Activated CD4-positive, alpha-beta T cell treated with anti-CD3 and anti-CD28 coated beads for 36 hours (primary cell): ENCODE measurements at regions of chr4 and their contacts with region 1.

Region 1: DNA sequence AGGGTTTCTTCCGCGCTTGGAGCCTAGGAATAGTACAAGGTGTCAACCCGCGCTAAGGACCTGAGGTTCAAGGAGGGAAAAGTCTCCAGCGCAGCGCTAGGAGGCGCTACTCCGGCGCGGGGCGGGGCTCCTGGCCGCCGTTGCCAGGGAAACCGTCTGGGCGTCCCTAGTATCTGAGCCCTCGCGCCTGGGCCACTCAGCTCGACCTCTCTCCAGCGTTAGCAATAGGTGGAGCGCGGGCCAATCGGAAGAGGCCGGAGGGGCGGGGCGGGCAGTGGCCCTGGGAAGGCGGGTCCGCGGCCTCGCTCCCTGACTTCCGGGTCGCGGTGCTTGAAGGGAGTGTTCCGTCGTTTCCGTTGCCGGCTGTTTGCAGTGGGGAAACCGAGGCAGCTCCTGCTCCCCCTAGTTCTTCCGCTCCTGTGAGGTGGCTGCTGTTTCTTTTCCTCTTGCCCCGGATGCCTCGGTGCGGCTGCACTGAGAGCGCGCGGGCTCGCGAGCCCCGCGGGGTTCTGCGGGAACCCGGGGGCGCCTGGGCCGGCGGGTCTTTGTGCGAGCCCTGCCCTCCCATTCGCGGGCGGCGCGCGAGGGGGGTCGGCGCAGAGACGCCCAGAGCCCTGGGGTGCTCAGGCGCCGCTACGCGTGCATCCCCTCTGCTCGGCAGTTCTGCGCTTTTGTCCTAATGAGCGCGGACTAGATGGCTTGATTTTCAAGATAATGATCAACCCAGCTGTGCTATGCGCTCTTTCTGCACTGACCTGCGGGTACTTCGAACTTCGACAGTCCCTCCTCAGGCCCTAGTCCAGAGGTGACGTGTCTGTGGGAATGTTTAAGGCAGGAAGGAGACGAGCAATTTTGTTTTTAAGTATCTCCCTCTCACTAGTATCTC is at the start of gene ELMOD2:
- DNase-seq: peak; percentile 99
- ATAC-seq: peak; percentile 100
- H3K4me3 Mint-ChIP-seq: peak within 1 kb of the TSS; percentile 82
- H3K27ac Mint-ChIP-seq: peak within 1 kb of the TSS; percentile 32
- H3K4me1 Mint-ChIP-seq: peaks cover 19% of the 10 kb centered on the region
- H3K27me3 Mint-ChIP-seq: no peaks in the 10 kb centered on the region
- total RNA-seq, gene ELMOD2: 13.2 to 14.3 TPM

Region 2: GRCh38 chr4:139083956-139084803 is 1439.9 kb before region 1 on chr4:
- CTCF ChIA-PET with region 1: no interaction called
- POLR2A ChIA-PET with region 1: no interaction called
- intact Hi-C with region 1: loop called in 1 of 2 experiments (anchors 10 kb)
- DNase-seq: peak; percentile 92
- ATAC-seq: peak; percentile 64
- H3K4me3 Mint-ChIP-seq: peak overlapping the region; percentile 100
- H3K27ac Mint-ChIP-seq: peak overlapping the region; percentile 99
- H3K4me1 Mint-ChIP-seq: peaks cover 30% of the 10 kb centered on the region
- H3K27me3 Mint-ChIP-seq: no peaks in the 10 kb centered on the region

Region 3: DNA sequence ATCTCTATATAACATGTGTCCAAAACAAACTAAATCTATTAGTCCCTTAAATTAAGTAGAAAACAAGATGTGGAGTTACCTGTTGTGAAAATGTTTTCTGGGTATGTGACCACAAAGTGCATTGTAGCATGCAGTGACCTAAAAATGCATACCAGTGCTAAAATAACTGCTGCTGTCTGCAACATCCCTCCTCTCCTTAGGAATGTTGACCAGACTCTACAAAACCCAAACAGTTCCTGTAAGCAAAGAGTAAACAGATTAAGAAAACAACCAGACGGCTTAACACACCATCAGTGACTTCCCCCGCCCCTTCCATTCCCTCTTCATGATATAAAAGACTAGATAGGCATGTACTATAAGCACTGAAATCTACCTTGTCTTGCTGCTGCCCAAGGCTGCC is 1086.0 kb before region 1 on chr4:
- CTCF ChIA-PET with region 1: no interaction called
- POLR2A ChIA-PET with region 1: interaction called, 10 read pairs
- intact Hi-C with region 1: no loop called
- DNase-seq: no peak
- ATAC-seq: no peak
- H3K4me3 Mint-ChIP-seq: no peak overlapping the region
- H3K27ac Mint-ChIP-seq: no peak overlapping the region
- H3K4me1 Mint-ChIP-seq: no peaks in the 10 kb centered on the region
- H3K27me3 Mint-ChIP-seq: no peaks in the 10 kb centered on the region

Region 4: GRCh38 chr4:139656614-139657486 is 867.2 kb before region 1 on chr4:
- CTCF ChIA-PET with region 1: interaction called, 4 read pairs
- POLR2A ChIA-PET with region 1: no interaction called
- intact Hi-C with region 1: loop called in 1 of 2 experiments (anchors 5 kb)
- DNase-seq: peak; percentile 73
- ATAC-seq: peak; percentile 48
- H3K4me3 Mint-ChIP-seq: peak overlapping the region; percentile 57
- H3K27ac Mint-ChIP-seq: peak overlapping the region; percentile 99
- H3K4me1 Mint-ChIP-seq: peaks cover 24% of the 10 kb centered on the region
- H3K27me3 Mint-ChIP-seq: no peaks in the 10 kb centered on the region

Region 5: GRCh38 chr4:140373328-140374129 is 150.6 kb before region 1 on chr4 and contains the start of gene SCOC:
- CTCF ChIA-PET with region 1: interaction called, 18 read pairs
- POLR2A ChIA-PET with region 1: interaction called, 3 read pairs
- intact Hi-C with region 1: loop called (anchors 1 kb)
- DNase-seq: peak; percentile 98
- ATAC-seq: peak; percentile 98
- H3K4me3 Mint-ChIP-seq: no peak within 1 kb of the TSS
- H3K27ac Mint-ChIP-seq: peak within 1 kb of the TSS; percentile 59
- H3K4me1 Mint-ChIP-seq: peaks cover 35% of the 10 kb centered on the region
- H3K27me3 Mint-ChIP-seq: no peaks in the 10 kb centered on the region
- total RNA-seq, gene SCOC: 37.1 to 47.8 TPM

Region 6: GRCh38 chr4:140851032-140851636 is 327.0 kb after region 1 on chr4:
- CTCF ChIA-PET with region 1: no interaction called
- POLR2A ChIA-PET with region 1: no interaction called
- intact Hi-C with region 1: loop called in 1 of 2 experiments (anchors 2 kb)
- DNase-seq: peak; percentile 37
- ATAC-seq: no peak
- H3K4me3 Mint-ChIP-seq: no peak overlapping the region
- H3K27ac Mint-ChIP-seq: no peak overlapping the region
- H3K4me1 Mint-ChIP-seq: no peaks in the 10 kb centered on the region
- H3K27me3 Mint-ChIP-seq: peaks cover 18% of the 10 kb centered on the region